HEK293T (cell line): ENCODE measurements at regions of chr3 and their contacts with region 1.

Region 1: DNA sequence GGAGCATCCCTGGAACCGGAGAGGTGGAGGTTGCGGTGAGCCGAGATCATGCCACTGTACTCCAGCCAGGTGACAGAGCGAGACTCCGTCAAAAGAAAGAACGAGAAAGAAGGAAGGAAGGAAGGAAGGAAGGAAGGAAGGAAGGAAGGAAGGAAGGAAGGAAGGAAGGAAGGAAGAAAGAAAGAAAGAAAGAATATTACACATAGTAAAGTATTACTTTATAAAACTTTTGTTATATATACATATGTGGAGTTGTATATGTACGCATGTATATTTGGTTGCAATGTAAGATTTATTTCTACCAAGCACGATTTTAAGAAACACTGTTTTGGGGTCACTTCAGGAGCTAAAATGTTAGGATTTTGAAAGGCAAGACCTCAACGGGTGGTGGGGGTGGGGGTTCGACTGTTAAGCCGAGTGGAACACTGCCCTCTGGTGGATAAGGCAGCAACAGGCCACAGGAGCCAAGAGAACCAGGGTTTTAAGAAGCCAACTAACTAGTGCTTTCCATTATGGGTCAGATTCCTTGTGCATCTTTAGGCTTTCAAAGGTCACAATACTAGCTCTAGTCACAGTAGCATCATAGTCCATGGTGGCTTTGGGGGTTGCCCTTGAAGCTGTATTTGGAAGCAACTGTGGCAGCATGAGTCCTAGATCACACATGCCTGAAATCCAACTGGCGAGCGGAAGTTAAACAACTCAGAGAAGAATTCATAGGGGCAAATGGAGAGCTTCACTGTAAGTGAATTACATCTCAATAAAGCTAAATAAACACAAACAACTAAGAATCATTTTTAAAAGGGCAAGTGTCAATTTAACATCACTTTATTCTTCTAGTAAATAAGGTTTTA is 22.5 kb downstream of the GLB1 start:
- DNase-seq: peak; percentile 89

Region 2: DNA sequence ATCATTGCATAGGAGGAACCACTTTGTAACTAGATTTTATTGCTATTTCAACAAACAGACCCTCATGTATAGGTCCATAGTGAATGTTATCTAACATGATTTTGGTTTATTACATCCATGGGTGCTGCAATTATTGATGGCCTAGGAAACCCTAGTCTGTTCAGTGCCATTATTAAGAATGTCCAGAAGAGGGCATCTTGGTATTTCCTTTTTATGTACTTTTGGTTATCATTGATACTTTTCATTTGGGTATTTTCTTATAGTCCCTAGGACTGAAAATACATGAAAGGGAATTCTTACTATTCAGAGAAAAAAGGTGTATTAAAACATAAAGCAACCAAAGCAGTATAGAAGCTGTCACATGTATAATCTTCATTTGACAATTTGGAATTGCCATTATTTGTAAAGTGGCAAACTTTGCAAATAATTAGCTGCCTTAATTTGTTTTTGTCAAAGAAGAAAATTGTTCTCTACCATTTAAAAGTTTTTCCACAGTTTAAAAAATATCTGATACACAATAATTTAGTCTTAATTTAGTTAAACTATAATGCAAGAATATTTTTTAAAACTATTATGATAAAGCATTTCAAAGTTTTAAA is 340.7 kb before region 1 on chr3:
- CTCF ChIA-PET with region 1: no interaction called
- POLR2A ChIA-PET with region 1: no interaction called
- DNase-seq: peak; percentile 39

Region 3: GRCh38 chr3:32922078-32922477 is 152.4 kb before region 1 on chr3:
- CTCF ChIA-PET with region 1: no interaction called
- POLR2A ChIA-PET with region 1: no interaction called
- DNase-seq: no peak

Region 4: GRCh38 chr3:32947789-32948238 is 126.6 kb before region 1 on chr3:
- CTCF ChIA-PET with region 1: interaction called, 18 read pairs
- POLR2A ChIA-PET with region 1: no interaction called
- DNase-seq: peak; percentile 74